ENCODE measurements at regions of chr10 and their contacts with region 1.

Region 1: GRCh38 chr10:92290837-92291615 is at the starts of genes CPEB3 and MARCHF5:
- DNase-seq: peak; percentile 93
- ATAC-seq: peak; percentile 98
- H3K4me3 ChIP-seq: peak within 1 kb of the TSS; percentile 90 to 100 (median 99)
- H3K27ac ChIP-seq: peak within 1 kb of the TSS; percentile 90
- H3K4me1 ChIP-seq: peaks cover 28% of the 10 kb centered on the region
- H3K27me3 ChIP-seq: no peaks in the 10 kb centered on the region; a peak in 2 of 5 replicates
- CTCF ChIP-seq: peak; percentile 72
- EP300 ChIP-seq: peak in 1 of 2 experiments; percentile 8; a peak in 1 of 4 replicates
- POLR2A ChIP-seq: peak; percentile 57 to 67; a peak in 3 of 4 replicates
- RAD21 ChIP-seq: peak; percentile 87
- total RNA-seq, gene CPEB3: 0.66 and 0.88 TPM in 2 replicates
- total RNA-seq, gene MARCHF5: 21.0 and 34.7 TPM in 2 replicates

Region 2: GRCh38 chr10:92087750-92088395 is 203.2 kb before region 1 on chr10:
- CTCF ChIA-PET with region 1: interaction called, 16 read pairs
- POLR2A ChIA-PET with region 1: no interaction called
- in situ Hi-C with region 1: loop called (anchors 5 kb)
- intact Hi-C with region 1: loop called (anchors 1 kb)
- DNase-seq: peak; percentile 90
- ATAC-seq: peak; percentile 100
- H3K4me3 ChIP-seq: no peak overlapping the region
- H3K27ac ChIP-seq: no peak overlapping the region
- H3K4me1 ChIP-seq: peaks cover 20% of the 10 kb centered on the region
- H3K27me3 ChIP-seq: no peaks in the 10 kb centered on the region
- CTCF ChIP-seq: peak; percentile 94
- EP300 ChIP-seq: no peak; a peak in 1 of 4 replicates
- POLR2A ChIP-seq: no peak
- RAD21 ChIP-seq: peak; percentile 95

Region 3: GRCh38 chr10:92124616-92125143 is 166.3 kb before region 1 on chr10:
- CTCF ChIA-PET with region 1: no interaction called
- POLR2A ChIA-PET with region 1: interaction called, 5 read pairs
- in situ Hi-C with region 1: no loop called
- intact Hi-C with region 1: loop called (anchors 2 kb)
- DNase-seq: peak; percentile 73
- ATAC-seq: peak; percentile 53
- H3K4me3 ChIP-seq: peak overlapping the region in 2 of 3 experiments; percentile 23 to 38; a peak in 2 of 6 replicates
- H3K27ac ChIP-seq: peak overlapping the region; percentile 92
- H3K4me1 ChIP-seq: peaks cover 74% of the 10 kb centered on the region
- H3K27me3 ChIP-seq: no peaks in the 10 kb centered on the region
- CTCF ChIP-seq: peak; percentile 44
- EP300 ChIP-seq: no peak
- POLR2A ChIP-seq: no peak
- RAD21 ChIP-seq: 0 out of 2 replicates have a peak, but pooled peaks have one; percentile 22

Region 4: GRCh38 chr10:92181575-92181974 is 109.5 kb before region 1 on chr10:
- CTCF ChIA-PET with region 1: no interaction called
- POLR2A ChIA-PET with region 1: no interaction called
- in situ Hi-C with region 1: no loop called
- intact Hi-C with region 1: loop called (anchors 5 kb)
- DNase-seq: peak; percentile 8
- ATAC-seq: no peak
- H3K4me3 ChIP-seq: no peak overlapping the region
- H3K27ac ChIP-seq: no peak overlapping the region
- H3K4me1 ChIP-seq: no peaks in the 10 kb centered on the region
- H3K27me3 ChIP-seq: no peaks in the 10 kb centered on the region
- CTCF ChIP-seq: no peak
- EP300 ChIP-seq: no peak
- POLR2A ChIP-seq: no peak
- RAD21 ChIP-seq: no peak

Region 5: GRCh38 chr10:92240289-92241157 is 50.5 kb before region 1 on chr10:
- CTCF ChIA-PET with region 1: no interaction called
- POLR2A ChIA-PET with region 1: interaction called, 47 read pairs
- in situ Hi-C with region 1: loop called (anchors 5 kb)
- intact Hi-C with region 1: loop called (anchors 1 kb)
- DNase-seq: peak; percentile 75
- ATAC-seq: peak; percentile 76
- H3K4me3 ChIP-seq: peak overlapping the region; percentile 78 to 91 (median 89)
- H3K27ac ChIP-seq: peak overlapping the region; percentile 92
- H3K4me1 ChIP-seq: peaks cover 44% of the 10 kb centered on the region
- H3K27me3 ChIP-seq: no peaks in the 10 kb centered on the region
- CTCF ChIP-seq: no peak
- EP300 ChIP-seq: no peak; a peak in 2 of 4 replicates
- POLR2A ChIP-seq: peak; percentile 66 to 81; a peak in 2 of 4 replicates
- RAD21 ChIP-seq: no peak

Region 6: GRCh38 chr10:92387289-92387940 is 96.4 kb after region 1 on chr10:
- CTCF ChIA-PET with region 1: no interaction called
- POLR2A ChIA-PET with region 1: no interaction called
- in situ Hi-C with region 1: no loop called
- intact Hi-C with region 1: no loop called
- DNase-seq: peak; percentile 65
- ATAC-seq: peak; percentile 73
- H3K4me3 ChIP-seq: no peak overlapping the region
- H3K27ac ChIP-seq: no peak overlapping the region
- H3K4me1 ChIP-seq: no peaks in the 10 kb centered on the region
- H3K27me3 ChIP-seq: no peaks in the 10 kb centered on the region
- CTCF ChIP-seq: no peak
- EP300 ChIP-seq: no peak
- POLR2A ChIP-seq: no peak
- RAD21 ChIP-seq: no peak